PC-3 (cell line): ENCODE measurements at regions of chr6 and their contacts with region 1.

Region 1: GRCh38 chr6:16956361-16956760 is 145.5 kb upstream of the STMND1 start:
- DNase-seq: peak; percentile 7
- ATAC-seq: no peak
- H3K4me3 ChIP-seq: no peak overlapping the region
- H3K27ac ChIP-seq: no peak overlapping the region
- H3K4me1 ChIP-seq: peaks cover 3% of the 10 kb centered on the region; the same call in 1 of the 2 replicates
- H3K27me3 ChIP-seq: no peaks in the 10 kb centered on the region
- CTCF ChIP-seq: peak; percentile 29; the same call in 1 of the 2 replicates

Region 2: DNA sequence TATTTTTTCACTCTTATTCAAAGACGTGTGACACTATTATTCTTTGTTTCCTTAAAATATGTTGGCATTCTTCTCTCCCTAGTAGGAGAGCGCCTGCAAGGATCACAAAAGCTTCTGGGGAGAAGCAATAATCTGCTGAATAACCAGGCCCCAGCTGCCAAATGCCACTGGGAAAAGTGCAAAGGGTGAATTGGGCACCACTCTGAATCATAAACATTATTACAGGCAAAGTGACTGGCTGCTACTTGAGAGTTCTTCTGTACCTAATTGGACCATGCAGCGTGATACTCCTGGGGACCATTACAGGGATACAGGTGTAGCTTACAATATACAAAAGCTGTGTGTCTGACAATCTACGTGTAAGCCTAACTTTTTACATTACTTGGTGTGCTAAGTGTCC is 347.9 kb before region 1 on chr6:
- CTCF ChIA-PET with region 1: interaction called, 10 read pairs
- POLR2A ChIA-PET with region 1: no interaction called
- intact Hi-C with region 1: no loop called
- DNase-seq: no peak
- ATAC-seq: no peak
- H3K4me3 ChIP-seq: no peak overlapping the region
- H3K27ac ChIP-seq: no peak overlapping the region
- H3K4me1 ChIP-seq: no peaks in the 10 kb centered on the region
- H3K27me3 ChIP-seq: no peaks in the 10 kb centered on the region
- CTCF ChIP-seq: no peak